Posterior vena cava (tissue), 2 donors: ENCODE measurements at regions of chr9 and their contacts with region 1.

Region 1: DNA sequence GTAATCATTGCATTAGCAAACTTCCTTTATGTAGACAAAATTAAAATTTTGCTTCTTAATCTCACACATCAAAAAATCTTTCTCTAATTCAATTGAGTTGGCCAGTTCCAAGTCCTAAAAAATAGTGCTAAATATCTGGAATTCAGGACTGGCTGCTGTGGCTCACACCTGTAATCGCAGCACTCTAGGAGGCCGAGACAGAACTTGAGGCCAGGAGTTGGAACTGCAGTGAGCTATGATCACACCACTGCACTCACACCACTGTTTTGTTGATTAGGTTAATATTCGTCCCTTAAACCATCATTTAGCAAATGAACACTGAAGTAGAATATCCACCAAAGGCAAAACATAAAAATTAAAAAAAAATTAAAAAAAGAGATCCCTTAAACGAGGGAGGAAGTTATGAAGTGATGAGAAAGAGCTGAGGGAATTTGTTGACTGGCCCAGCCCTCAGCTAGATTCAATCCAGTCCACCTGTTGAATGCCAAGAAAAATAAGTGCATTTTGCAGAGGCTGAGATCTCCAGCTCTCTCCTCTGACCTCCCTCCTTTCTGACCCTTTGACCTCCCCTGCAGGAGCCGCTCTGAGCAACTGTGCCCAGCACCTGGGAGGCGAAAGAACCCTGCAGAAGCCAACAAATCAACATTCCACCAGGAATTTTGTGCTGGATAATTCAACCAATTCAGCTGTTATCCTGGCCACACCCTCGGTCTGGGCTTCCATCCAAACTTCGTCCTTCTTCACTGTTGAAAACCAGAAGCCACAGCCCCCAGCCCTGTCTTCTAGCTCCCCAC is 96.8 kb downstream of the OR2K2 start:
- DNase-seq: no peak

Region 2: DNA sequence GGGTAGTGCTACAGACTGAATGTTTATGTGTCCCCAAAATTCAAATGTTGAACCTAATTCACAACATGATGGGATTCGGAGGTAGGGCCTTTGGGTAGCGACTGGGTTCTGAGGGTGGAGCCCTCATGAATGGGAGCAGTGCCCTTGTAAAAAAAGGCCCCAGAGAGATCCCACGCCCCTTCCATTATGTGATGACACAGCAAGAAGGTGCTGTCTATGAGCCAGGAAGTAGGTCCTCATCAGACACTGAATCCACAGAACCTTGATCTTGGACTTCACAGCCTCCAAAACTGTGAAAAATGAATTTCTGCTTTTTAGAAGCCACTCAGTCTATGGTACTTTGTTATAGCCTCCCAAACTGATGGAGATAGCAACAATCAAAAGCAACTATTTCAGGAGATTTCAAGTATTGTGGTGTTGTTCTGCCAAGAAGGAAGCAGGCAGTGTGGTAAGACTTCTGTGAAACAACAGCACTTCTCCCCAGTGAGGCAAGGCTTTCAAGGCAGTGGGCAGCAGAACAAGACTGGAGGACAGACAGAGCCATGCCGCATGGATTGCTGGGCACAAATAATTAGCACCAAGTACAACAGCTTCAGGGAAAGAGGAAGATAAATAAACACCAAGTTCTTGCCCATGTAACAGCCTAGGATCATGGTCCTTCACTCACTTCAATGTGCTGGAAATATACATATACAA is 20.7 kb after region 1 on chr9:
- intact Hi-C with region 1: loop called in 1 of 2 experiments (anchors 1 kb)
- DNase-seq: no peak

Region 3: DNA sequence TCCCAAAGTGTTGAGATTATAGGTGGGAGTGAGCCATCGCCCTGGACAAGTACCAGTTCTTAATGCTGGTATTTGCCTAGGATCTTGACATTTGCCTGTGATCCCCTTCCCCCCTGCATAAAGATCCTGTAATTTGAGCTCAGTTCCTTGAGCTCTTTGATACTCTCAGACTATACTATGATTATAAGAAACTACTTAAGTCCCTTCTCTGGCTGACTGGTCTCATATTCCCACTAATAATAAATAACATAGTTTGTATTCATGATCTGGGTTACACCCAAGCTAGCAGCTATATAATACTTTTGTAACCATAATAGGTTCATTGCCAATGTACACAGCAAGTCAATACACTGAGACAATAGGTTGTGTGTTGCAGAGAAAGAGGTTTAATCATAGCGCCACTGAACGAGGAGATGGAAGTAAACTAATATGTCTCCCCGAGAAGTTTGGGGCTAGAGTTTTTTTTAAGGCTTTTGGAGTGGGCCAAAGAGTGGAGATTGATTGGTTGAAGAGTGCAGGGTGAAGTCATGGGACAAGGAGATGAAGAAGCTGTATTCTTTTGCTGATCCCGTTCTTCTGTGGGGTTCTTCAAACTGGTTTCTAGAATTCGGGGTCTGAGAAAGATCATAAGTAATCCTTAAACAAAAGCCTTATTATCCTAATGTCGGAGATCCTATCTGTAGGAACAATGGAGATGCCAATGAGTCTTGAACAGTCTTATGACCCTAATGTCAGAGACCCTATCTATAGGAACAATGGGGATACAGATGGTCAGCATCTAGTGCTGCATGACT is 582.3 kb after region 1 on chr9:
- intact Hi-C with region 1: no loop called
- DNase-seq: no peak